ENCODE measurements at regions of chr1 and their contacts with region 1.

Region 1: DNA sequence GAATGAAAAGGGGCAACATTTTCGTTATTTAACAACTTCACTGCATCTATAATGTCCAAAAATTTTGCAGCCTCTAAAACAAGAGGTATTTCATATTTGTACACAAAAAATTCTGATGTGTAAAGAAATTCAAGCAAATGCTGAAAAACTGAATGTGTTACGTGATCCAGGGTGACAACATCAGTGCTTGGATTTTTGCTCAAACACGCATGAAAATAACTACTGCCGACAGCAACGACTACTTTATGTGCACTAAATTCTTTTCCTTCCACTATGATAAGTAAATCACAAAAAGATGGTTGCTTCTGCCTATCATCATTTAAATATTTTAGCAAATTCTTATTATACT is 53.4 kb upstream of the ASPM start:
- DNase-seq: peak; percentile 4
- H3K4me3 ChIP-seq: peak overlapping the region; percentile 78
- H3K27ac ChIP-seq: peak overlapping the region; percentile 87
- H3K4me1 ChIP-seq: peaks cover 15% of the 10 kb centered on the region
- H3K27me3 ChIP-seq: no peaks in the 10 kb centered on the region
- CTCF ChIP-seq: no peak

Region 2: DNA sequence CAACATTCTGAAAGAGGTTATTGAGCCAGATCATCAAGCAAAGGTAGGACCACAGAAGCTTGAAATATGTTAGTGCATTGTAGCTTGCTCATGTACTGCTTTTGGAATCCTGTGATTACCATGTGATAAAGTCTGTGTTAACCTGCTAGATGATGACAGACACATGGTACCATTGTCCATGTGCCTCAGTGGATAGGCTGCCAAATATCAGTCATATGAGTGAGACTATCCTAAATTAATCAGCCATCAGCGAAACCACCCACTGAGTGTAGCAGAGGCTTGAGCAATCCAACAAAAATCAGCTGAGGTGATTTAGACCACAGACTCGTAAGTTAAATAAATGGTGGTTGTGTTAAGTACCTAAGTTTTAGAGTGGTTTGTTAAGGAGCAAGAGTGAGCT is 35.5 kb after region 1 on chr1:
- CTCF ChIA-PET with region 1: no interaction called
- POLR2A ChIA-PET with region 1: interaction called, 19 read pairs
- intact Hi-C with region 1: no loop called
- DNase-seq: no peak
- H3K4me3 ChIP-seq: no peak overlapping the region
- H3K27ac ChIP-seq: no peak overlapping the region
- H3K4me1 ChIP-seq: no peaks in the 10 kb centered on the region
- H3K27me3 ChIP-seq: no peaks in the 10 kb centered on the region
- CTCF ChIP-seq: no peak

Measured in A673 (cell line).